CD8-positive, alpha-beta T cell (primary cell): ENCODE measurements at regions of chr9 and their contacts with region 1.

Region 1: GRCh38 chr9:130473566-130473965 is 28.8 kb downstream of the ASS1 start:
- DNase-seq: no peak
- ATAC-seq: no peak
- H3K4me3 ChIP-seq: no peak overlapping the region
- H3K4me3 Mint-ChIP-seq: no peak overlapping the region
- H3K27ac ChIP-seq: no peak overlapping the region
- H3K27ac Mint-ChIP-seq: no peak overlapping the region
- H3K4me1 ChIP-seq: no peaks in the 10 kb centered on the region
- H3K4me1 Mint-ChIP-seq: no peaks in the 10 kb centered on the region
- H3K27me3 ChIP-seq: peaks cover 3 to 8% of the 10 kb centered on the region in 2 experiments
- H3K27me3 Mint-ChIP-seq: peaks cover 18% of the 10 kb centered on the region
- CTCF ChIP-seq: no peak

Region 2: DNA sequence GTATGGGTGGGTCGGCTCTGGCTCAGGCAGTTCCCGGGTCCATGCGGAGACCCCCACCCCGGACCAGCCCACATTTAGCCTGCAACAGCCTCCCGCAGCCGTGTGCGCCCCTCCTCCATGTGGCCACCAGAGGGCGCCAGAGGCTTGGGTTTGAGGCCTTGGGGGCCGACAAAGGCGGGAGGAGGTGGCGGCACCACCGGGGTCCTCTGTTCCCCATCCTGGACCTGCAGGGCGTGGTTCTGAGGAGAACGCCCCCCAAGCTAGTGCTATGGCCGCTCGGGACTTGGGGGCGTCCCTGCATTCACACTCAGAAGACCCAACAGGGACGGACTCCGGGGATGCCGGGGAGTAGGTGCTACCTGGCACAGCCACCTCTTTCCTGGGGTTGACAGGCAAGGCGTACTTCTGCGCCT is 12.3 kb before region 1 on chr9:
- CTCF ChIA-PET with region 1: interaction called, 10 read pairs
- POLR2A ChIA-PET with region 1: no interaction called
- intact Hi-C with region 1: no loop called
- DNase-seq: peak; percentile 48 to 86 (median 71)
- ATAC-seq: peak; percentile 65
- H3K4me3 ChIP-seq: no peak overlapping the region
- H3K4me3 Mint-ChIP-seq: no peak overlapping the region
- H3K27ac ChIP-seq: no peak overlapping the region
- H3K27ac Mint-ChIP-seq: no peak overlapping the region
- H3K4me1 ChIP-seq: no peaks in the 10 kb centered on the region
- H3K4me1 Mint-ChIP-seq: no peaks in the 10 kb centered on the region
- H3K27me3 ChIP-seq: no peaks in the 10 kb centered on the region
- H3K27me3 Mint-ChIP-seq: peaks cover 24% of the 10 kb centered on the region
- CTCF ChIP-seq: peak; percentile 82